Endothelial cell of umbilical vein (primary cell): ENCODE measurements at regions of chr7 and their contacts with region 1.

Region 1: DNA sequence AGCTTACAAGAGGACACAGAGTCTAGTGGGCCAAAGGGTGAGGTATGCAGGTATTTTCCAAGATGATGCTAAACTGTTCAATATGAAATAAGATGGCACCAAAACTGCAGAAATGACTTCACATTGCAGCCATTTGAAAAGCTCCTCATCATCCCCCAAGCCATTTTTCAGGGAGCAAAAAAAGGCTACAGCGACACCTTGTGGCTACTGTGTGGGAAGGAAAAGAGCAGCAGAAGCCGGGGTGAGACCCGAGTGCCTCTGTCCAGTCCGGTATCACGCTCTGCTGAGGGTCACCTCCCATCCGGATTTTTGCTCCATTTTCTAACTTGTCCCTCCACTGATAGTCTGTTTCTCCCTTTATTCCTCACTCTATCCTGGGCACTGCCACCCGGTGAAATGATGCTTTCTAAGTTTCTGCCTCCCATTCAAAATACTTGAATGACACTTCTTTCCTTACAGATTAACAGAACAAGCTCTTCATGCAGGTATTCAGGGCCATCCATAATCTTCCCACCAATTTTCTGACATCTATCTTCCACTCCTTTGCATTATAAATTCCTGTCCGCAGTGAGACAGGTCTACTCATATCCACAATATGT is 220.2 kb downstream of the DGKI start:
- DNase-seq: peak; percentile 54
- H3K4me3 ChIP-seq: no peak overlapping the region
- H3K27ac ChIP-seq: no peak overlapping the region
- H3K4me1 ChIP-seq: no peaks in the 10 kb centered on the region
- H3K27me3 ChIP-seq: peaks cover 1 to 10% of the 10 kb centered on the region in 2 experiments
- CTCF ChIP-seq: peak; percentile 78 to 92
- POLR2A ChIP-seq: no peak

Region 2: GRCh38 chr7:136114966-136115762 is 1511.4 kb before region 1 on chr7:
- CTCF ChIA-PET with region 1: interaction called, 25 read pairs
- POLR2A ChIA-PET with region 1: no interaction called
- dilution Hi-C with region 1: no loop called
- intact Hi-C with region 1: loop called (anchors 1 kb)
- DNase-seq: peak; percentile 39
- H3K4me3 ChIP-seq: no peak overlapping the region
- H3K27ac ChIP-seq: no peak overlapping the region
- H3K4me1 ChIP-seq: no peaks in the 10 kb centered on the region
- H3K27me3 ChIP-seq: no peaks in the 10 kb centered on the region
- CTCF ChIP-seq: peak; percentile 74 to 78
- POLR2A ChIP-seq: no peak

Region 3: GRCh38 chr7:137169282-137169698 is 457.3 kb before region 1 on chr7:
- CTCF ChIA-PET with region 1: interaction called, 18 read pairs
- POLR2A ChIA-PET with region 1: no interaction called
- dilution Hi-C with region 1: no loop called
- intact Hi-C with region 1: loop called (anchors 10 kb)
- DNase-seq: peak; percentile 53
- H3K4me3 ChIP-seq: no peak overlapping the region
- H3K27ac ChIP-seq: no peak overlapping the region
- H3K4me1 ChIP-seq: no peaks in the 10 kb centered on the region
- H3K27me3 ChIP-seq: no peaks in the 10 kb centered on the region
- CTCF ChIP-seq: peak; percentile 46 to 49
- POLR2A ChIP-seq: no peak

Region 4: GRCh38 chr7:137606061-137606674 is 20.4 kb before region 1 on chr7:
- CTCF ChIA-PET with region 1: interaction called, 176 read pairs
- POLR2A ChIA-PET with region 1: no interaction called
- dilution Hi-C with region 1: no loop called
- intact Hi-C with region 1: loop called (anchors 1 kb)
- DNase-seq: peak; percentile 62
- H3K4me3 ChIP-seq: no peak overlapping the region
- H3K27ac ChIP-seq: no peak overlapping the region
- H3K4me1 ChIP-seq: no peaks in the 10 kb centered on the region
- H3K27me3 ChIP-seq: peaks cover 15 to 24% of the 10 kb centered on the region in 2 experiments
- CTCF ChIP-seq: peak in 1 of 2 donors; percentile 19
- POLR2A ChIP-seq: no peak

Region 5: DNA sequence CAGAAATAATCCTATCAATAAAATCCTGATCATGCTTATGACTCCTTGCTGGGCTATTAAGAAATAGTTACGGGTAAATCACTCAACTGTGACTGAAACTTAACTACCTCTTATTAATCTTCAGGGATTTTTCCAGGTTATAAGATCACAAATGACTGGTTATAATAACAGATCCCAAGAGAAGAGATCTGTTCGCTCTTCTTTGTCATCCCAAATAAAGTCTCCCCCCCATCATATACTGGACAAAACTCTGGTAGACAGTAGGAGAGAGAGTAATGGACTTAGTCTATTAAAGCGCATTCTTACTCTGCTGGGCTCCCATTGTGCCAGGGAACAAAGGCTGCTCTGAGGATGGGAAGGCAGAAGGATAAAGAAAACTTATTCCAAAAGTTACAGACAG is 13.6 kb before region 1 on chr7:
- CTCF ChIA-PET with region 1: interaction called, 176 read pairs
- POLR2A ChIA-PET with region 1: no interaction called
- dilution Hi-C with region 1: no loop called
- intact Hi-C with region 1: no loop called
- DNase-seq: no peak
- H3K4me3 ChIP-seq: no peak overlapping the region
- H3K27ac ChIP-seq: no peak overlapping the region
- H3K4me1 ChIP-seq: no peaks in the 10 kb centered on the region
- H3K27me3 ChIP-seq: peaks cover 5 to 18% of the 10 kb centered on the region in 2 experiments
- CTCF ChIP-seq: no peak
- POLR2A ChIP-seq: no peak